B cell (primary cell): ENCODE measurements at regions of chr4 and their contacts with region 1.

Region 1: DNA sequence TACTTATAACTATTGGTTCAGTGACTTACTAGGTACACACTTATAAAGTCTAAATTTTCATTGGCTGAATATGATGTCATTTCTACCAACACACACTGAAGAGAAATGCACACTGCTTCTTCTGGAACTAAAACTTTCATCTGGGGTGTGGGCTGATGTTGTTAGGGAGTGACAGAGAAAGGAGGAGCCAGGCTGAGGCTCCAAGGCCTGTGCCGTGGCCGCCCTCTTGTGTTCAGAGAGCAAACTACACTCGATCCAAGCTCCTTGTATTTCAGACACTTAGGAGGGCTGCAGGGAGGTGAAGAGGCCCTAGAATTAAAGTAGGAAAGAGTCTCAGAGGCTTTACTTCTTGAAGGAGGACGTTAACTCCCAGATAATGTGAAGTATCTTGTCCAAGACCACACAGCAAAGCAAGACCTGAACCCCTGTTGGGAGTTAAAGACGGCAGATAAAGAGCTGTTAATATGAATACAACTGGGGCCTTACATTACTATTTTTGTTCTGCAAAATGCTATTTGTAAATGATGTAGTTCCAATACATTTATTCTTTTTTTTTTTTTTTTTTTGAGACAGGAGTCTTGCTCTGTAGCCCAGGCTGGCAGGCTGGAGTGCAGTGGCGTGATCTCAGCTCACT is 137.5 kb downstream of the AFAP1 start:
- DNase-seq: peak; percentile 69
- ATAC-seq: peak; percentile 87
- H3K4me3 ChIP-seq: no peak overlapping the region
- H3K4me3 Mint-ChIP-seq: no peak overlapping the region
- H3K27ac ChIP-seq: no peak overlapping the region
- H3K27ac Mint-ChIP-seq: no peak overlapping the region
- H3K4me1 ChIP-seq: no peaks in the 10 kb centered on the region
- H3K4me1 Mint-ChIP-seq: no peaks in the 10 kb centered on the region
- H3K27me3 ChIP-seq: peaks cover 0 to 5% (median 0%) of the 10 kb centered on the region in 4 experiments
- H3K27me3 Mint-ChIP-seq: peaks cover 20% of the 10 kb centered on the region
- CTCF ChIP-seq: peak; percentile 81

Region 2: GRCh38 chr4:7719354-7720174 is 82.6 kb before region 1 on chr4:
- CTCF ChIA-PET with region 1: no interaction called
- POLR2A ChIA-PET with region 1: no interaction called
- intact Hi-C with region 1: no loop called
- DNase-seq: no peak
- ATAC-seq: no peak
- H3K4me3 ChIP-seq: no peak overlapping the region
- H3K4me3 Mint-ChIP-seq: no peak overlapping the region
- H3K27ac ChIP-seq: no peak overlapping the region
- H3K27ac Mint-ChIP-seq: no peak overlapping the region
- H3K4me1 ChIP-seq: no peaks in the 10 kb centered on the region
- H3K4me1 Mint-ChIP-seq: no peaks in the 10 kb centered on the region
- H3K27me3 ChIP-seq: peaks cover 0 to 7% (median 0%) of the 10 kb centered on the region in 4 experiments
- H3K27me3 Mint-ChIP-seq: peaks cover 23% of the 10 kb centered on the region
- CTCF ChIP-seq: peak; percentile 51

Region 3: DNA sequence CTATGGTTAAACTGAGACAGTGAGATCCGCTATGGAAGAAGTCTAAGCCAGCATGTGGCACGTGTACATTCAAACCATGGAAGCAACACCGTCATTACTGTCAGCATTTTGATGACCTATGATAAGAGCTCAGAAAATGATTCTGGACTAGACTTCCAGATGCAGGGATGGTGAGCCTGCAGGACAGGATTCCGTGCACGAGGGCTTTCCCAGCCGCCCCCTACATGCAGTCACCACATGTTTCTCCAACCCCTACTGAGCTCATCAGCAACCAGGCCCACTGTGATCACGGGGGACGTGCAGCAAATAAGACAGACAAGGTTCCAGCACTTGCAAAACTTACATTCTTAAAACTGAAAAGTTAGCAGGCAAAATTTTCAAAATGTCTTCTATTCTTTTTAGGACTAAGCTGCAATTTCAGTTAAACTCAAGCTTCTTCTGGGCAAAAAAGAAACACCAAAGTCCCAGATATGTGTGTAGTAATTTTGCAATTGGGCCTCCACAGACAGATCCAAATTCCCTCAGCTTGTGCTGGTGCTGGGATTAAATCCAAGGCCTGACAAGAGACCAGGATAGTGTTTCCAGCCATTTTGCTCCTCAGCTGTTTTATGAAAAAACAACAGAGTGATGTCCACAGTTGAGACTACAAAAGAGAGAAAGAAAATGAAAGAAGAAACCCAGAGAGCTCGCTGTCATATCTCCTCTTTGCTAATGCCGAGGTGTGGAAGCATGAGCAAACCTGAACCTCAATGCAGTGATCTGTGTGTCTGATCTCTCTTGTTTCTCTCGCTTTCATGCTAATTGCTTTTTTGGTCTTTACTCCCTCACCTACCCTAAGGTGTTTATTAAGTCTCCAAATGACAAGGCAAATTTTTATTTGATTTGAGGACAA is 19.3 kb after region 1 on chr4:
- CTCF ChIA-PET with region 1: interaction called, 11 read pairs
- POLR2A ChIA-PET with region 1: no interaction called
- intact Hi-C with region 1: no loop called
- DNase-seq: no peak
- ATAC-seq: no peak
- H3K4me3 ChIP-seq: no peak overlapping the region
- H3K4me3 Mint-ChIP-seq: no peak overlapping the region
- H3K27ac ChIP-seq: no peak overlapping the region
- H3K27ac Mint-ChIP-seq: no peak overlapping the region
- H3K4me1 ChIP-seq: no peaks in the 10 kb centered on the region
- H3K4me1 Mint-ChIP-seq: no peaks in the 10 kb centered on the region
- H3K27me3 ChIP-seq: peaks cover 0 to 3% (median 0%) of the 10 kb centered on the region in 4 experiments
- H3K27me3 Mint-ChIP-seq: peaks cover 17% of the 10 kb centered on the region
- CTCF ChIP-seq: no peak

Region 4: DNA sequence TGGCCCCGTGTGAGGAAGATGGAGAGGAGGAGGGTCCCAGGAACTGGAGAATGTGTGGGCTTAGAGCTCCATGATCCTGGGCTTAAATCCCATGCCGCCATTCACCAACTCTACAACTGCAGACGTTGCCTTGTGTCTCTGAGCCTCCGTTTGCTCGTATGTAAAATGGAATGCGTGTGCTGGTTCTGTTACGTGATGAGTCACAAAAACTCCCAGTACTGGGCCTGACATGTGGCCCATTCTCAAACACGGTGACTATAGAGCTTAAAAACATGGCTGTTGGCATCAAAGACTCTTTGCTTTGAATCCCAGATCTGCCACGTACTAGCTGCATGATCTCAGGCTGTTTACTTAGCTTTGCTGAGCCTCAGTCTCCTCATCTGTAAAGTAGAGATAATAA is 150.4 kb after region 1 on chr4:
- CTCF ChIA-PET with region 1: no interaction called
- POLR2A ChIA-PET with region 1: no interaction called
- intact Hi-C with region 1: no loop called
- DNase-seq: no peak
- ATAC-seq: no peak
- H3K4me3 ChIP-seq: no peak overlapping the region
- H3K4me3 Mint-ChIP-seq: no peak overlapping the region
- H3K27ac ChIP-seq: no peak overlapping the region
- H3K27ac Mint-ChIP-seq: no peak overlapping the region
- H3K4me1 ChIP-seq: no peaks in the 10 kb centered on the region
- H3K4me1 Mint-ChIP-seq: no peaks in the 10 kb centered on the region
- H3K27me3 ChIP-seq: peaks cover 0 to 8% (median 0%) of the 10 kb centered on the region in 4 experiments
- H3K27me3 Mint-ChIP-seq: peaks cover 32% of the 10 kb centered on the region
- CTCF ChIP-seq: no peak

Region 5: GRCh38 chr4:8192748-8193738 is 390.8 kb after region 1 on chr4:
- CTCF ChIA-PET with region 1: interaction called, 49 read pairs
- POLR2A ChIA-PET with region 1: no interaction called
- intact Hi-C with region 1: loop called (anchors 1 kb)
- DNase-seq: peak; percentile 92
- ATAC-seq: peak; percentile 98
- H3K4me3 ChIP-seq: no peak overlapping the region
- H3K4me3 Mint-ChIP-seq: peak overlapping the region; percentile 34
- H3K27ac ChIP-seq: peak overlapping the region; percentile 24 to 34
- H3K27ac Mint-ChIP-seq: peak overlapping the region; percentile 83
- H3K4me1 ChIP-seq: peaks cover 16 to 31% of the 10 kb centered on the region in 2 donors
- H3K4me1 Mint-ChIP-seq: peaks cover 35% of the 10 kb centered on the region
- H3K27me3 ChIP-seq: peaks cover 0 to 5% (median 1%) of the 10 kb centered on the region in 4 experiments
- H3K27me3 Mint-ChIP-seq: no peaks in the 10 kb centered on the region
- CTCF ChIP-seq: peak; percentile 68

Region 6: DNA sequence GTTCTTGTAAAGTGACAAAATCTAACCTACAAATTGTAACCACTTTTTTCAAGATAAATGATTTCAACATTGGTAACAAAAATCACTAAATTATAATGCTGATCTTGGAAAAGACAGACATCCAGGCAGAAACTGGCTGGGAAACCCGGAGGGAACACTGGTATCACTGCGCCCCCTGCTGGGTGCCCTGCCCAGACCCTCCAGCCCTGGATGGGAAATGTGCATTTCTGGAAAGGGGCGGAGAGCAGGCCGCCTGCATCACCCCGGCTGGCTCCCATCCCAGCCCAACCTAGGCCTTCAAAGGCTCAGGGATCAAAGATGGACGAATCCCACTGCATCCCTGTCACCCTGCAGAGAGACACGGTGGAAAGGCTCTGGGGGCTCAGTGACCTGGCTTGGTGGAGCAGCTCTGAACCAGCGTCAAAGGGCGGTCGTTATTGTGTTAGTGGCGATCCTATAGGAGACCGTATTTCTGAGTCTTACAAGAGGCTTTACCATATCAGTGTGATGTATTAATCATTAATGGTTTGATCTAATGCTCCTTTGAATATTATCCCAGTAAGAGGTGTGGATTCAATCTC is 601.1 kb after region 1 on chr4:
- CTCF ChIA-PET with region 1: interaction called, 21 read pairs
- POLR2A ChIA-PET with region 1: no interaction called
- intact Hi-C with region 1: no loop called
- DNase-seq: peak; percentile 56
- ATAC-seq: peak; percentile 53
- H3K4me3 ChIP-seq: no peak overlapping the region
- H3K4me3 Mint-ChIP-seq: no peak overlapping the region
- H3K27ac ChIP-seq: no peak overlapping the region
- H3K27ac Mint-ChIP-seq: no peak overlapping the region
- H3K4me1 ChIP-seq: no peaks in the 10 kb centered on the region
- H3K4me1 Mint-ChIP-seq: peaks cover 2% of the 10 kb centered on the region
- H3K27me3 ChIP-seq: no peaks in the 10 kb centered on the region
- H3K27me3 Mint-ChIP-seq: no peaks in the 10 kb centered on the region
- CTCF ChIP-seq: peak; percentile 89